CD4-positive, alpha-beta T cell (primary cell): ENCODE measurements at regions of chr2 and their contacts with region 1.

Region 1: DNA sequence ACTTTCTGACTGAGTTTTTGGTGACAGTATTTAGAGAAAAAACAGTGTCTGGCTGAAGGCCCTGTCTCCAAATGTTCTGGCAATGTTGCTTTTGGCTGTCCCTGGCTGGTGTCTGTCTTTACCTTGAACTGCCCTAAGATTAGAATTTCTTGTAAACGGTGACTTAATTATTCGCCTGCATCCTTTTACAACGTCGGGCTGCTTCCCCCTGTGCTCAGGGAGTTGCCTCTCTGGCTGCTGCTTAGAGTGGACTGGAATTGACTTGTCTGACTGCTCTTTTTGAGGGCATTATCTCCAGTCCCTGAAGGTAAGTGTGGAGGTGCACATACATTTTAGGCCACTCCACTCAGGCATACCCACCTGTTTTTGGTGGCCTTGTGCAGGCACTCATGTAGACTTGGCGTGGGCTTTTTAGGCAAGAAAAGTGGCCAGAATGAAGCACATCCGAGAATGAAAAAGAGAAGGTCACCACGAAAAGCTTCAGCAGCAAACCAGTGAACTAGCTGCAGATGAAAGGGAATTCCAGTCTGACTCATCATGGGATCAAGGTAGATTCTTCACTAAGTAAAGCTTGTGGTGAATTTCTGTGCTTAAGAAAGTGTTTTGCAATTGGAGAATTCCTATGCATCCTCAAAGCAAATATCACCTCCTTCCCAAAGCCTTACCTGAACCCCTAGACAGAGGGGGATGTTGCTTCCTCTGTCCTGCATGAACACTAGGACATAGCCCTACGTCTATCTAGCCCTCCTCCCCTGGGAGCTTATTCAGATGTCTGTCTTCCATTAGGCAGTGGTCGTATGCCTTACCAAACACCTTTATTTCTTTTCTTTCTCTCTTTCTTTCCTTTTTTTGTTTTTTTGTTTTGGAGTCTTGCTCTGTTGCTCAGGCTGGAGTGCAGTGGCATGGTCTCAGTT is 230.3 kb upstream of the TRIB2 start:
- DNase-seq: no peak
- ATAC-seq: no peak
- H3K4me3 ChIP-seq: no peak overlapping the region
- H3K4me3 Mint-ChIP-seq: no peak overlapping the region
- H3K27ac ChIP-seq: peak overlapping the region in 1 of 2 donors; percentile 68
- H3K27ac Mint-ChIP-seq: peak overlapping the region; percentile 83
- H3K4me1 ChIP-seq: peaks cover 53% of the 10 kb centered on the region
- H3K4me1 Mint-ChIP-seq: peaks cover 71% of the 10 kb centered on the region
- H3K27me3 ChIP-seq: no peaks in the 10 kb centered on the region
- H3K27me3 Mint-ChIP-seq: no peaks in the 10 kb centered on the region
- CTCF ChIP-seq: no peak

Region 2: GRCh38 chr2:12452211-12452610 is 34.3 kb before region 1 on chr2:
- CTCF ChIA-PET with region 1: no interaction called
- POLR2A ChIA-PET with region 1: interaction called, 13 read pairs
- intact Hi-C with region 1: no loop called
- DNase-seq: peak in 2 of 14 experiments; percentile 19 to 20
- ATAC-seq: no peak
- H3K4me3 ChIP-seq: peak overlapping the region; percentile 23
- H3K4me3 Mint-ChIP-seq: peak overlapping the region; percentile 55
- H3K27ac ChIP-seq: peak overlapping the region in 1 of 2 donors; percentile 67
- H3K27ac Mint-ChIP-seq: peak overlapping the region; percentile 75
- H3K4me1 ChIP-seq: peaks cover 19% of the 10 kb centered on the region
- H3K4me1 Mint-ChIP-seq: peaks cover 54% of the 10 kb centered on the region
- H3K27me3 ChIP-seq: no peaks in the 10 kb centered on the region
- H3K27me3 Mint-ChIP-seq: no peaks in the 10 kb centered on the region
- CTCF ChIP-seq: no peak

Region 3: GRCh38 chr2:12759238-12759641 is 272.8 kb after region 1 on chr2:
- CTCF ChIA-PET with region 1: no interaction called
- POLR2A ChIA-PET with region 1: no interaction called
- intact Hi-C with region 1: no loop called
- DNase-seq: no peak
- ATAC-seq: no peak
- H3K4me3 ChIP-seq: no peak overlapping the region
- H3K4me3 Mint-ChIP-seq: no peak overlapping the region
- H3K27ac ChIP-seq: no peak overlapping the region
- H3K27ac Mint-ChIP-seq: no peak overlapping the region
- H3K4me1 ChIP-seq: peaks cover 4% of the 10 kb centered on the region
- H3K4me1 Mint-ChIP-seq: peaks cover 14% of the 10 kb centered on the region
- H3K27me3 ChIP-seq: no peaks in the 10 kb centered on the region
- H3K27me3 Mint-ChIP-seq: no peaks in the 10 kb centered on the region
- CTCF ChIP-seq: no peak